Endothelial cell of umbilical vein (primary cell): ENCODE measurements at regions of chr6 and their contacts with region 1.

Region 1: GRCh38 chr6:27753668-27754407 is 158.4 kb downstream of the OR2B2 start:
- DNase-seq: peak; percentile 37
- H3K4me3 ChIP-seq: peak overlapping the region; percentile 31 to 61 (median 38)
- H3K27ac ChIP-seq: no peak overlapping the region
- H3K4me1 ChIP-seq: peaks cover 5% of the 10 kb centered on the region
- H3K27me3 ChIP-seq: peaks cover 35 to 36% of the 10 kb centered on the region in 2 experiments
- CTCF ChIP-seq: no peak
- POLR2A ChIP-seq: no peak

Region 2: DNA sequence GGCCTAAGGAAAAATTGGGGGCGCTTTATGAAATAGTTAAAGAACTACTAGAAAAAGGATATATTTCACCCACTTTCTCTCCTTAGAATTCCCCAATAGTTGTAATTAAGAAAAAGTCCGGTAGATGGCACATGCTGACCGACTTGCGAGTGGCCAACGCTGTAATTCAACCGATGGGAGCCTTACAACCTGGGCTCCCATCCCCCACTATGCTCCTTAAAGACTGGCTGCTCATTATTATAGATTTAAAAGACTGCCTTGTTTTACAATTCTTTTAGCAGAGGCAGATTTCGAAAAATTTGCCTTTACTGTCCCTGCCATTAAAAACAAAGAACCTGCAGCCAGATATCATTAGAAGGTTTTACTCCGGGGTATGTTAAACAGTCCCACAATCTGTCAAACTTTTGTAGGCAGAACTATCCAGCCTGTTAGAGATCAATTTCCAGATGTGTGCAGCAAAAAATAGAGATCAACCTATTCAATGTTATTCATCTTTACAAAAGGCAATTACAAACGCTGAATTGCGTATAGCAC is 564.9 kb before region 1 on chr6:
- CTCF ChIA-PET with region 1: interaction called, 16 read pairs
- POLR2A ChIA-PET with region 1: interaction called, 3 read pairs
- dilution Hi-C with region 1: no loop called
- intact Hi-C with region 1: loop called (anchors 1 kb)
- DNase-seq: peak; percentile 83
- H3K4me3 ChIP-seq: peak overlapping the region; percentile 59 to 80 (median 66)
- H3K27ac ChIP-seq: peak overlapping the region; percentile 37
- H3K4me1 ChIP-seq: no peaks in the 10 kb centered on the region
- H3K27me3 ChIP-seq: peaks cover 0 to 4% of the 10 kb centered on the region in 2 experiments
- CTCF ChIP-seq: peak; percentile 54 to 55
- POLR2A ChIP-seq: no peak

Region 3: DNA sequence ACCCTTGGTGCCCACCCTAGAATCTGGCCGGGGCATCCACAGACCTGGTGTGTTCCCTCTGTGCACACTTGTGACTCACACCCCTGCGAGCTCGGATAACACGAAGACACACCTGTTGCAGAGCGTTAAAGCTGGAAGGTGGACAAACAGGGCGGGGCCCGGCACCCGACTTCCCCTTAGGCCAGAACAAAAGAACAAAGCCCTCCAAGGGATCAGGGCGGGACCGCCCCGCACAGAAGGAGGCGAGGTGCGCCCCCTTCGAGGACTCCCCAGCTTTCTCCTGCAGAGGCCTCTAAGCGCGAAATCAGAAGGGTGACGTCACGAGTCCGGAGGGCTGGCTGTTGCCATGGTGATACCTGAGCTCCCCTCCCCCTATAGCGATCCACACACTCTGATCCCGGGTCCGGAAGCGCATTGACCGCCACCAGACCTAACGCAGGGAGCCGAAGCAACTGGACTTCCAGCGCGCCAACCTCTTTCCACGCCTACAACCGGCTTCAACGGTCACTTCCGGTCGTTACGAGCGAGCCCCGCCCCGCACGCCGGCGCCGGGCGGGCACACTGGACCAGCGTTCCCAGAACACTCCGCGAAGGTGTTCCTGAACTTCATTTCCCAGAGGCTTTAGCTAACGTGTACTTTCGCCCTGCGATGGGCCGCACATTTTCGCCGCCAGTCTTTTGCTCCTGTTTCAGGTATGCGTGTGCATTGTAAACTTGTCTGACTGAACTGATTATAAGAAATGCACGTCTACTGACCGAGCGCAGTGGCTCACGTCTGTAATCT is 281.0 kb before region 1 on chr6 and contains the start of gene ZNF184:
- CTCF ChIA-PET with region 1: interaction called, 13 read pairs
- POLR2A ChIA-PET with region 1: no interaction called
- dilution Hi-C with region 1: no loop called
- intact Hi-C with region 1: no loop called
- DNase-seq: peak; percentile 98
- H3K4me3 ChIP-seq: peak within 1 kb of the TSS; percentile 68 to 94 (median 82)
- H3K27ac ChIP-seq: peak within 1 kb of the TSS; percentile 74
- H3K4me1 ChIP-seq: peaks cover 9% of the 10 kb centered on the region
- H3K27me3 ChIP-seq: peaks cover 9 to 14% of the 10 kb centered on the region in 2 experiments
- CTCF ChIP-seq: no peak
- POLR2A ChIP-seq: peak; percentile 84
- total RNA-seq, gene ZNF184: 5.4 and 6.5 TPM in 2 replicates

Region 4: GRCh38 chr6:27545271-27546046 is 208.4 kb before region 1 on chr6:
- CTCF ChIA-PET with region 1: interaction called, 11 read pairs
- POLR2A ChIA-PET with region 1: no interaction called
- dilution Hi-C with region 1: no loop called
- intact Hi-C with region 1: no loop called
- DNase-seq: peak; percentile 43
- H3K4me3 ChIP-seq: peak overlapping the region; percentile 0 to 74 (median 73)
- H3K27ac ChIP-seq: no peak overlapping the region
- H3K4me1 ChIP-seq: peaks cover 13% of the 10 kb centered on the region
- H3K27me3 ChIP-seq: peaks cover 0 to 6% of the 10 kb centered on the region in 2 experiments
- CTCF ChIP-seq: no peak
- POLR2A ChIP-seq: no peak

Region 5: GRCh38 chr6:27630727-27631608 is 122.9 kb before region 1 on chr6:
- CTCF ChIA-PET with region 1: no interaction called
- POLR2A ChIA-PET with region 1: no interaction called
- dilution Hi-C with region 1: no loop called
- intact Hi-C with region 1: no loop called
- DNase-seq: peak; percentile 41
- H3K4me3 ChIP-seq: peak overlapping the region; percentile 14 to 71 (median 69)
- H3K27ac ChIP-seq: no peak overlapping the region
- H3K4me1 ChIP-seq: no peaks in the 10 kb centered on the region
- H3K27me3 ChIP-seq: no peaks in the 10 kb centered on the region
- CTCF ChIP-seq: peak; percentile 6 to 26
- POLR2A ChIP-seq: no peak

Region 6: DNA sequence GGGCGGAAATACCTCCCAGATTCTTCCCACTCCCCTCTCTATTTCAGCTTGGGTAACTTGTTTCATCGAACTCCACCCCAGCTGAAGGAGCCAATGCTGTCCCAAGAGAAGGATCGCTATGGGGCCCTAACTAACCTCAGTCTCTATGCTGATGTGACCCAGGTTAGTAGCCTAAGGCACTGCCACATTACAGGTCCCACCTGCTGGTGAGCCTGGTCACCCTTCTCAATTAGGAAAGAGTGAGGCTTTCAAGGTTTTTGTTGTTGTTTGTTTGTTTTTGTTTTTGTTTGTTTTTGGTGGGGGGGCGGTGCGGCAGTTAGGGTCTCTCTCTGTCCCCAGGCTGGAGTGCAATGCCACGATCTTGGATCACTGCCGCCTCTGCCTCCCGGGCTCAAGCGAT is 10.0 kb before region 1 on chr6:
- CTCF ChIA-PET with region 1: interaction called, 61 read pairs
- POLR2A ChIA-PET with region 1: no interaction called
- dilution Hi-C with region 1: no loop called
- intact Hi-C with region 1: loop called (anchors 2 kb)
- DNase-seq: no peak
- H3K4me3 ChIP-seq: no peak overlapping the region
- H3K27ac ChIP-seq: no peak overlapping the region
- H3K4me1 ChIP-seq: no peaks in the 10 kb centered on the region
- H3K27me3 ChIP-seq: peaks cover 13 to 25% of the 10 kb centered on the region in 2 experiments
- CTCF ChIP-seq: no peak
- POLR2A ChIP-seq: no peak

Region 7: DNA sequence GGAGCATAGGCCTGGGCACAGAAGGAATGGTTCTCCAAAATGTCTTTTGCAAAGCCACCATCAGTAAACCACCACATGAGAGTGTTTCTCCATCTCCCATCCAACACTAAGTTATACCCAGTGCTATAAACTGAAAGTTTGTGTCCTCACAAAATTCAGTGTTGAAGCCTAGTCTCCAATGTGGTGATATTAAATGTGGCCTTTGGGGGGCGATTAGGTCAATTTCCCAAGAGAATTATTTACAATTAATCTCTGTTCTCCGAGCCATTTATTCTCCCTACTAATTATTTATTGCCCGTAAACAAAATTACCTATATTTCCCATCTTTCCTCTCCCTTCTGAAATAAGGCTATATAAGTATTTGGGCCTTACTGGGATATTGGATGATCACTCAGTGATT is 132.2 kb after region 1 on chr6:
- CTCF ChIA-PET with region 1: no interaction called
- POLR2A ChIA-PET with region 1: no interaction called
- dilution Hi-C with region 1: no loop called
- intact Hi-C with region 1: no loop called
- DNase-seq: no peak
- H3K4me3 ChIP-seq: no peak overlapping the region
- H3K27ac ChIP-seq: no peak overlapping the region
- H3K4me1 ChIP-seq: peaks cover 9% of the 10 kb centered on the region
- H3K27me3 ChIP-seq: no peaks in the 10 kb centered on the region
- CTCF ChIP-seq: no peak
- POLR2A ChIP-seq: no peak